Right ventricle myocardium inferior (tissue), 1 donor: ENCODE measurements at regions of chr1 and their contacts with region 1.

Region 1: DNA sequence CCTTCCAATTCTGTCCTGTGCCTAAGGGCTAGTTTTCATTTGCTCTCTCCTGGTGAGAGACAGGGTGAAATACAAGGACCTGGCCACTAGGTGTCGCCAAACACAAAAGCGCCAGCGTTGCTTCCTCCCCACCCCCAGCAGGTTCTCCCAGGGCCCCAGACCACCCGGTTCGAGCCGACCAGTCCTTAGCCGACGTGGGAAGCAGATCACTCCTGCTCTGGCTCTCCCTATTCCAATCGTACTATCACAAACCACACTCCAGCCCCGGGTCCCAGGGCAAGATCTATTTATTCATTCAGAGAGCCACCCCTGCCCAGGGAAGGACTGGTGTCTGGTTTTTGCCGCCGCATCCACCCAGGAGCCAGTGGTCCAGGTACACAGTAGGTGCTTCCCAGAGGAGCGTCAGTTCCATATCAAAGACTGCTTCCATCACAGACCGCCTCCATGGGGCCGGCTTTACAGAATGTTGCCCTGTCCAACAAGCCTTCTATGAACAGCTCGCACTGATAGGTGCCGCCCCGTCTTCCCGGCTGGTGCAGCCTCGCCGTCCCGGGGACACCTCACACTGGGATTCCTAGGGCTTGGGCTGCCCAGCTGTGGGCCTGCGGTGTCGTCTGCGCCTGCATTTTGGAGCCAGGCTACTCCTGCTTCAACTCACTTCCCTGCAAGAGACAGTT is 35.0 kb downstream of the CTNNBIP1 start:
- DNase-seq: no peak
- ATAC-seq: peak; percentile 67

Region 2: GRCh38 chr1:9823943-9824701 is 51.0 kb before region 1 on chr1 and contains the start of gene CLSTN1:
- intact Hi-C with region 1: loop called (anchors 5 kb)
- DNase-seq: peak; percentile 95
- ATAC-seq: peak; percentile 88
- total RNA-seq, gene CLSTN1: 52.3 TPM

Region 3: DNA sequence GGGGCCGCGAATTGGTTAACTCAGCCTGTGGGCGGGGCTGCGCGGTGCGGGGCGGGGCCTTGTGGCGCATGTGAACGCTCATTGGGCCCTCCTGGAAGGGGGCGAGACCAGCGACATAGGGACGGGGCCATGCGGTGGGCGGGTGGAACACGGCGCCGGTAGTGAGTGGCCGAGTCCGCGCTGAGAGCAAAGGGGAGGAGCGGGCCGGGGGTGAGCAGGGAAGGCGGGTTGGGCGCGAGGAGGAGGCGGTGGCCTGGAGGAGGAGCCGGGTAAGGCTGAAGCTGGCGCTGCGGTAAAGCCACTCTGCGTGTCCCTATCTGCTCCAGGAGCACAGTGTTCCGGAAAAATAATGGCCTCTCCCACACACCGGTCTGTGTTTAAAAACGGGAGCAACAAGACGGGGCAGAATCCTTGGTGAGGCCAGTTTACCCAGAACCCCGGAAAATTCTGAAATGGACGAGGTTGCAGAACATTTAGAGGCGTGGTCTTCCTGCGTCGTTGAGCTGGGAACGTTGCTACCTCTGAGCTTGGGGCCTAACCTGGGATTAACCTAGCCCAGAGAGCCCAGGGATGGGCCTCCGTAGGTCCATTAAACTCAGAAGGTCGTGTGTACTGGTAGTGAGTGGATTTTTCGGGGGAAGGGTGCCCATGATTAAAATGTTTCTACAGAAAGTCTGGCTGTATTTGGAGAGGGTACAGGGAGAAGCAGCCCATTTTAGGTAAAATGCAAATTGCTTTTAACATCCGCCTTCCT is 35.5 kb after region 1 on chr1:
- intact Hi-C with region 1: loop called (anchors 1 kb)
- DNase-seq: peak; percentile 100
- ATAC-seq: peak; percentile 99

Region 4: GRCh38 chr1:9942939-9943788 is 68.1 kb after region 1 on chr1 and contains the starts of genes LZIC and NMNAT1:
- intact Hi-C with region 1: loop called (anchors 2 kb)
- DNase-seq: peak; percentile 96
- ATAC-seq: peak; percentile 99
- total RNA-seq, gene LZIC: 41.8 TPM
- total RNA-seq, gene NMNAT1: 19.3 TPM

Region 5: DNA sequence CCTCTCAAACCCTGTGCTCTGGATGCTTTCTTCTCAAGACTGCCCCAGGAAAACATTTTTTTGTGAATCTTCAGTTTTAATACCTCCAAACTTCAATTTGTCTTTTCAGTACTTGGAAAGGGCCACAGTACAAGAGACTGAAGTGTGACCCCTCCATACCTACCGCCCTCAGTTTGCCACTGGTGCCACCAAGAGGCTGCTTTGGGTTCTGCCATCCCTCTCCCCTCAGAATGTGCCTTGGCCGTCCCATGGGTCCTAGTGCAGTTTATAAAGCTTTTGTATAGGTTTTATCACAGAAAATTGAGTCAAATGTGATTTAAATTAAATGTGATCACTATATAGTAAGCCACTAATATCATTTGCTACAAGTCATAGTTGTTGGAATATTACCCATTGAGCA is 462.9 kb after region 1 on chr1:
- intact Hi-C with region 1: loop called (anchors 10 kb)
- DNase-seq: no peak
- ATAC-seq: peak; percentile 88